ENCODE measurements at regions of chr19 and their contacts with region 1.

Region 1: DNA sequence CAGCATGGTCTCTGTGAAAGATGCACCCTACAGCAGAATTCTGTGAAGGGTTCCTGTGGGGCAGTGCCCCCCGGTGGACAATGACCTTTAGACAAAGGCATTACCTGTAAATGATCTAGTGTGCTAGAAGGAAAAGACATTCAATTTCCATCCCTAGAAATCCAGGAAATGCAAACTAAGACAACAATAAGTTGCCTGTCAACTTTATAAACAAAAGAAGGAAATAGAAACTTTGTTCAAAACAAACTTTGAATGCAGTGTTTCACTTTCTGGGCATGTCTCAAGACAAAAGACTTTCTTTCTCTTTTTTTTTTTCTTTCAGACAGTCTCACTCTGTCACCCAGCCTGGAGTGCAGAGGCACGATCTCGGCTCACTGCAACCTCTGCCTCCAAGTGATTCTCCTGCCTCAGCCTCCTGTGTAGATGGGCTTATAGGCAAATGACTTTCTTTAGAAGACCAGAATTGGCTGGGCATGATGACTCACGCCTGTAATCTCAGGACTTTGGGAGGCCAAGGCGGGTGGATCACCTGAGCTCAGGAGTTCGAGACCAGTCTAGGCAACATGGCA is 15.5 kb downstream of the TEX101 start:
- DNase-seq: peak in 2 of 14 experiments; percentile 45 to 56
- ATAC-seq: peak; percentile 79
- H3K4me3 ChIP-seq: no peak overlapping the region
- H3K4me3 Mint-ChIP-seq: peak overlapping the region; percentile 16
- H3K27ac ChIP-seq: peak overlapping the region in 1 of 2 donors; percentile 53
- H3K27ac Mint-ChIP-seq: peak overlapping the region; percentile 89
- H3K4me1 ChIP-seq: peaks cover 17% of the 10 kb centered on the region
- H3K4me1 Mint-ChIP-seq: peaks cover 39% of the 10 kb centered on the region
- H3K27me3 ChIP-seq: no peaks in the 10 kb centered on the region
- H3K27me3 Mint-ChIP-seq: no peaks in the 10 kb centered on the region
- CTCF ChIP-seq: no peak

Region 2: GRCh38 chr19:43446746-43447489 is 16.7 kb after region 1 on chr19:
- CTCF ChIA-PET with region 1: interaction called, 52 read pairs
- POLR2A ChIA-PET with region 1: interaction called, 9 read pairs
- intact Hi-C with region 1: loop called (anchors 1 to 2 kb)
- DNase-seq: peak; percentile 74 to 91 (median 79)
- ATAC-seq: peak; percentile 86
- H3K4me3 ChIP-seq: no peak overlapping the region
- H3K4me3 Mint-ChIP-seq: no peak overlapping the region
- H3K27ac ChIP-seq: no peak overlapping the region
- H3K27ac Mint-ChIP-seq: peak overlapping the region; percentile 81
- H3K4me1 ChIP-seq: peaks cover 19% of the 10 kb centered on the region
- H3K4me1 Mint-ChIP-seq: peaks cover 39% of the 10 kb centered on the region
- H3K27me3 ChIP-seq: no peaks in the 10 kb centered on the region
- H3K27me3 Mint-ChIP-seq: no peaks in the 10 kb centered on the region
- CTCF ChIP-seq: peak; percentile 97

Measured in CD4-positive, alpha-beta T cell (primary cell).